ENCODE measurements at regions of chr13 and their contacts with region 1.

Region 1: DNA sequence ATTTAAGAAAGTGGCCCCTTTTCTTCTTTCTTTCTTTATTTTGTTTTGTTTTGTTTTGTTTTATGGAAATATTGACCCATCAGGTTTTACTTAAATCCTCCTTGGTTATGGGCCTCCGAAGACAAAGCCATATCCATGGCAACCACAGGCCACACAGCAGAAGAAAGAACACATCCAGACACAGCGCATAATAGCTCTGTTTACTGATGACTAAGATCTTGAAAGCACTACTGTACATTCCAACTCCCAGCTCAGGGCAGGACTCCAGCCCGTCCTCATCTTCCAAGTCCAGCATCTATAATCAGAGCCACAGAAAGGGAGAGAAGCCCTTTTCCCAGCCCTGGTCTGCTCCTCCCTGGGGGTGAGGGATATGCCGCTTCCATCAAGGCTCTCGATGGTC is 84.3 kb downstream of the NUFIP1 start:
- DNase-seq: peak in 1 of 2 donors; percentile 81
- H3K4me3 ChIP-seq: no peak overlapping the region
- H3K27ac ChIP-seq: peak overlapping the region; percentile 75 to 76
- H3K4me1 ChIP-seq: peaks cover 20 to 37% of the 10 kb centered on the region in 2 donors
- H3K27me3 ChIP-seq: no peaks in the 10 kb centered on the region
- CTCF ChIP-seq: no peak

Region 2: GRCh38 chr13:44577236-44578066 is 327.5 kb before region 1 on chr13:
- intact Hi-C with region 1: no loop called
- DNase-seq: peak; percentile 84 to 97
- H3K4me3 ChIP-seq: peak overlapping the region; percentile 66 to 97
- H3K27ac ChIP-seq: peak overlapping the region; percentile 98
- H3K4me1 ChIP-seq: peaks cover 10 to 21% of the 10 kb centered on the region in 2 donors
- H3K27me3 ChIP-seq: no peaks in the 10 kb centered on the region
- CTCF ChIP-seq: peak in 1 of 3 experiments; percentile 20

Region 3: DNA sequence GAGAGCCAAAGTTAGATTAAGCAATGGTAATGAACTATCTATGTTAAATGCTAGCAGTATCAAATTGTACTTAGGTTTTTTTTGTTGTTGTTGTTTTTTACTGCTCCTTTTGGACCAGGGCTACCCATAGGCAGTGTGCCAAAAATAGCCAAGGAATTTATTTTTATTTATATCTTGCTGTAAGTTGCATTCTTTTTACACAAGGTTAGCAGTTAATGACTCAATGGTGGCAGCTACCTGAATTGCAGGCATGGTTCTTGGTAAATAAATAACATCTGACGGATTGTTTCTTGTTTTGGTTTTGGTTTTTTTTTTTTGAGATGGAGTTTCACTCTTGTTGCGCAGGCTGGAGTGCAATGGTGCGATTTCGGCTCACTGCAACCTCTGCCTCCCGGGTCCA is 134.0 kb before region 1 on chr13:
- intact Hi-C with region 1: loop called (anchors 5 kb)
- DNase-seq: no peak
- H3K4me3 ChIP-seq: no peak overlapping the region
- H3K27ac ChIP-seq: no peak overlapping the region
- H3K4me1 ChIP-seq: peaks cover 0 to 7% of the 10 kb centered on the region in 2 donors
- H3K27me3 ChIP-seq: no peaks in the 10 kb centered on the region
- CTCF ChIP-seq: no peak

Region 4: DNA sequence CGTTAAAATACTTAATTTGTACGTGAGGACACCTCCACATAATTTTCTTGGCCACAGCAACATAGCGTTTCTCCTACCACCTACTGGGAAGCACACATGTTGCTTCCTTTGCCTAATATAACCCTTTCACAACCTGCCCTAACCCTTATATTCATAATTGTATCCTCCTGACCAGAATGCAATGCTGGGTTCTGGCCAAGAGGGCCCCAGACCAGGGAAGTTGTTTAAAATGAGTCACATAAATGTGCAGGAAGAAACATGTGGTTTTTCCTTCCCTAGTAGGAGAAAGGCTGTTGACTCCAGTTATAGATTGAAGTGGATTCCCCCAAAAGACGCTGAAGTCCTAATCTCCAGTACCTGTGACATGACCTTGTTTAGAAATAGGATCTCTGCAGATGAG is 103.0 kb before region 1 on chr13:
- intact Hi-C with region 1: no loop called
- DNase-seq: no peak
- H3K4me3 ChIP-seq: no peak overlapping the region
- H3K27ac ChIP-seq: no peak overlapping the region
- H3K4me1 ChIP-seq: peaks cover 0 to 3% of the 10 kb centered on the region in 2 donors
- H3K27me3 ChIP-seq: no peaks in the 10 kb centered on the region
- CTCF ChIP-seq: no peak

Region 5: DNA sequence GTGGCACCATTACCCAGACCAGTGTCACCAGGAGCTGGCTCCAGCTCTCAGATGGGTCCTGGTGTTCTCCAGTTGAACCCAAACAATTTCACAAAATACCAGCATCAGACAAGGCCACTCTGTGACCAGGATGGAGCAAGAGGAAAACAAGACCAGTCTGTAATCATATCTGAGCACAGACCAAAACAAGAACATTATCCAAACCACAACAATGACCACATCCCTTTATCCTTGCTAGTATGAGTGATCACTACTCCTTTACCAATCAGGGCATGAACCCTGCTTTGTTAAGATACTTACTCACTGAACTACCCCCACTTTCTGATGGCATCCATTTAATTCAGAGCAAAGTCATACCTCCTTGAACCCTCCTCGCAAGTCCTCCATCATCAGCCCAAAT is 61.6 kb before region 1 on chr13:
- intact Hi-C with region 1: loop called (anchors 5 kb)
- DNase-seq: no peak
- H3K4me3 ChIP-seq: no peak overlapping the region
- H3K27ac ChIP-seq: peak overlapping the region; percentile 76 to 81
- H3K4me1 ChIP-seq: peaks cover 0 to 22% of the 10 kb centered on the region in 2 donors
- H3K27me3 ChIP-seq: no peaks in the 10 kb centered on the region
- CTCF ChIP-seq: no peak

Region 6: DNA sequence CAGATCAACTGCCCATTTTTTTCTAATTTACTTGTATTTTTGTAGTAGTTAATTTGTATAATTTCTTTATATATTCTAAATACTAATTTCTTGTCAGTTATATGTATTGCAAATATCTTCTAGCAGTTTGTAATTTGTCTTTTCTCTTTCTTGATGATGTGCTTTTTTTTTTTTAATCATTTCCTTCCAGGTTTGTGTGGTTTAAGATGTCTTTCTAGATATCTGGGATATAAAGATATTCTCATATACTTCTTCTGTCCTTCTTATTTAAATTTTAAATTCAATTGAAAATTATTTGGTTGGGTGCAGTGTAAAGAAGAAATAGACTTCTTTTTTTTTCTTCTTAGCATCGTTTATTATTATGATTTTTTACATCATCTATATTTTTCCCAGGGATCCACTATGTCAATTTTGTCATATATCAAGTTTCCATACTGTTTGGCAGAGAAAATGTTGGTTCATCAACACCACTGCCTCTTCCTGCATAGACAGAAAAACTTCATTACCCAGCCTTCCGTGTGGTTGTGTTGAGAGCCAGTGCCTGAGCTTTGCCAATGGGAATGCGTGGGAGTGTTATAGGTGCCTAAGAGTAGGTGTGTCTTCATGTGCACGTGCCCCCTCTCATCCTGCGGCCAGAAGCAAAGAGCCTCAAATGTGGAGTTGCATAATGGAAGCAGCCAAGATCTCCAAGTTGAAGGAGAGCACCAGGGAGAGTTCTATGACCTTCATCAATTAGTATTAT is 1184.0 kb after region 1 on chr13:
- intact Hi-C with region 1: no loop called
- DNase-seq: no peak
- H3K4me3 ChIP-seq: no peak overlapping the region
- H3K27ac ChIP-seq: no peak overlapping the region
- H3K4me1 ChIP-seq: no peaks in the 10 kb centered on the region
- H3K27me3 ChIP-seq: no peaks in the 10 kb centered on the region
- CTCF ChIP-seq: no peak